ENCODE measurements at regions of chr2 and their contacts with region 1.

Region 1: DNA sequence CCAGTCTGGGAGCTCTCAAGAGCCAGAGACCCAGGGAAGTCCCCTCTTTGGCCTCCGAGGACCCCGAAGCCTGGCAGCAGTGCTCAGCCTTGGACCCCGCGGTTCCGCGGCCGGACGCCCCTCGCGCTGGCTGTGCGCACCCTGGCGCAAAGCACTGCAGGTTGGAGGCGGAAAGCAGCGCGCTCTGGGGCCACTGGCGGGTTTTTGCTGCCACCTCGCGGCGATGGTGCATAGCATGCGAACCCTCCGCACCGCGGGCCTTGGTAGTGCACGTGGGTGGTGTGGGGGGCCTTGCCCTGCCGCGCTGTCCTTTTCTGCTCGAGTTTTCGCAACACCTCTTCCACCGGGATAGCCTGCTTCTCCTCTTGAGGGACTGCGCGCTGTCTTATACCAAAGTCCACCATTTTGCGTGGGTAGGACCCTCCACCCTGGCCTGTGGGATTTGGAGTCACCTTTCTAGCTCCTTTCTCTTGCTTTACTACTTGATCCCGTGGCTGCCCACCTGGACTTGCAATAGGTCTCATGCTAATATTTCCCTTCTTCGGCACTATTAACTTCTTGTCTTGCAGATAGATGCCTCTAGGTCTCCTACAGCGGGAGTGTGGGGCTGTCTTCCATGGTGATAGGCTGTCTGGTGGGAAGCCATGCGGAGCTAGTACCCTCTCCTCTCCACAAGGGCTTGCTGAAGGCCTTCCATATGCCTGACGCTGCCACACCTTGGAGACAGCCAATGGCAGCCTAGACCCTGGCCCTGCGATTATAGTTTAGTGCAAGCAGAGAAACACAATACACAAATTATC is 14.3 kb downstream of the SIX3 start:
- DNase-seq: peak; percentile 56 to 72
- H3K4me3 ChIP-seq: no peak overlapping the region
- H3K27ac ChIP-seq: no peak overlapping the region
- H3K4me1 ChIP-seq: peaks cover 18 to 31% of the 10 kb centered on the region in 2 donors
- H3K27me3 ChIP-seq: peaks cover 10% of the 10 kb centered on the region
- CTCF ChIP-seq: peak; percentile 50 to 94 (median 69)
- POLR2A ChIP-seq: no peak

Region 2: DNA sequence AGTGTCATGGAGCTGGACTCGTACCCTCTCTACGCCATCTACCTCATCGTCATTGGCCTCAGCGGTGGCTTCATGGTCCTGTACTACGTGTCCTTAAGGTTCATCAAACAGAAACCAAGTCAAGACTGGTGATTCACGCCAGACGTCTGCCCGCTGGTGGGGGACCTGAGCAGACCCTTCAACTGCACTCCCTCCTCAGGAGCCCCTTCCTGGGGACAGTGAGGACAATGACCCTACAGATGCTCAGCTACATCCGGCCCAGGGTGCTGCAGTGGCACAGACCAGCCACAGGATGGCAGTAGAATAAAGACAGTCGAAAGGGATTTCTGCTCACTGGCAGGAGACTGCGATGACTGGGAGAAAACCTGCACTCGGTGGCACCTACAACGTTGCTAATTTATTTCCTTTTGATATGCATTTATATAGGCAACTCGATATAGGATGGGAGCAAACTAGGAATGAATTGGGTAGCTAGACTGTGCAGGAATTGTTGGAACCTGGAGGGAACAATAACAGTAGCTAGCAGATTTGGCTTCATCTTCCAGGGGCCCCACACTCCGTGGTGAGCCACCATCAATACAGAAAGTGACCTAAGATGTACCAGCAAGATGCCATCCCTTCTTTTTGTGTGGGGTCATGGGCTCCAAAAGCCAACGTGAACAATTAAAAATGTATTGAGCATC is 1077.9 kb before region 1 on chr2:
- intact Hi-C with region 1: loop called (anchors 10 kb)
- DNase-seq: peak; percentile 59 to 67
- H3K4me3 ChIP-seq: no peak overlapping the region
- H3K27ac ChIP-seq: no peak overlapping the region
- H3K4me1 ChIP-seq: peaks cover 0 to 4% of the 10 kb centered on the region in 2 donors
- H3K27me3 ChIP-seq: no peaks in the 10 kb centered on the region
- CTCF ChIP-seq: peak; percentile 79 to 97 (median 84)
- POLR2A ChIP-seq: no peak

Region 3: GRCh38 chr2:44389895-44390294 is 565.9 kb before region 1 on chr2:
- intact Hi-C with region 1: loop called (anchors 10 kb)
- DNase-seq: no peak
- H3K4me3 ChIP-seq: no peak overlapping the region
- H3K27ac ChIP-seq: no peak overlapping the region
- H3K4me1 ChIP-seq: no peaks in the 10 kb centered on the region
- H3K27me3 ChIP-seq: no peaks in the 10 kb centered on the region
- CTCF ChIP-seq: no peak
- POLR2A ChIP-seq: no peak

Region 4: GRCh38 chr2:44598746-44599529 is 356.9 kb before region 1 on chr2:
- intact Hi-C with region 1: no loop called
- DNase-seq: no peak
- H3K4me3 ChIP-seq: no peak overlapping the region
- H3K27ac ChIP-seq: no peak overlapping the region
- H3K4me1 ChIP-seq: no peaks in the 10 kb centered on the region
- H3K27me3 ChIP-seq: no peaks in the 10 kb centered on the region
- CTCF ChIP-seq: no peak
- POLR2A ChIP-seq: no peak

Region 5: DNA sequence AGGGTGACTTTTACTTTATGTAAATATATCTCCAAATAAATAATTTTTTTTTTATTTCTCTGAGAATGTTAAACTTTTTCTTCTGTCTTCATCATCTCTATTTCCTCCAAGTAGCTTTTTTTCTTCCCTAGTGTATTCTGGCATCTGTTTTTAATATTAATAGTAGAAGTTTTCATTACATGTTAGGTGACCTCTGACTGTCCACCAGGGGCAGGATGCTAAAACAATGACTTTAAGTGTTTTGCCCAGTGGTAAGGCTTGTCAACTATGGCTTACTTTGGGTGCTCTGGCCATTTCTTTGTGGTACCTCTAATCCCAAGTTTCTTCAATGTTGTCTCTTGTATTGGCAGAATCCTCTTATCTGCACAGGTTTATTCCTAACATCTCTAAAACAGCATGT is 528.2 kb after region 1 on chr2:
- intact Hi-C with region 1: no loop called
- DNase-seq: no peak
- H3K4me3 ChIP-seq: no peak overlapping the region
- H3K27ac ChIP-seq: no peak overlapping the region
- H3K4me1 ChIP-seq: no peaks in the 10 kb centered on the region
- H3K27me3 ChIP-seq: no peaks in the 10 kb centered on the region
- CTCF ChIP-seq: peak in 1 of 6 experiments; percentile 24
- POLR2A ChIP-seq: no peak

Measured in thyroid gland (tissue), 4 donors.